Activated CD4-positive, alpha-beta T cell treated with anti-CD3 and anti-CD28 coated beads for 36 hours (primary cell): ENCODE measurements at regions of chr20 and their contacts with region 1.

Region 1: GRCh38 chr20:44738813-44739477 is 6.7 kb upstream of the KCNK15 start:
- DNase-seq: peak; percentile 75
- ATAC-seq: peak; percentile 80
- H3K4me3 Mint-ChIP-seq: peak overlapping the region; percentile 43
- H3K27ac Mint-ChIP-seq: peak overlapping the region; percentile 6
- H3K4me1 Mint-ChIP-seq: peaks cover 14% of the 10 kb centered on the region
- H3K27me3 Mint-ChIP-seq: no peaks in the 10 kb centered on the region

Region 2: GRCh38 chr20:44326391-44327159 is 412.4 kb before region 1 on chr20:
- CTCF ChIA-PET with region 1: no interaction called
- POLR2A ChIA-PET with region 1: no interaction called
- intact Hi-C with region 1: no loop called
- DNase-seq: peak; percentile 56
- ATAC-seq: peak; percentile 64
- H3K4me3 Mint-ChIP-seq: no peak overlapping the region
- H3K27ac Mint-ChIP-seq: no peak overlapping the region
- H3K4me1 Mint-ChIP-seq: no peaks in the 10 kb centered on the region
- H3K27me3 Mint-ChIP-seq: peaks cover 7% of the 10 kb centered on the region

Region 3: DNA sequence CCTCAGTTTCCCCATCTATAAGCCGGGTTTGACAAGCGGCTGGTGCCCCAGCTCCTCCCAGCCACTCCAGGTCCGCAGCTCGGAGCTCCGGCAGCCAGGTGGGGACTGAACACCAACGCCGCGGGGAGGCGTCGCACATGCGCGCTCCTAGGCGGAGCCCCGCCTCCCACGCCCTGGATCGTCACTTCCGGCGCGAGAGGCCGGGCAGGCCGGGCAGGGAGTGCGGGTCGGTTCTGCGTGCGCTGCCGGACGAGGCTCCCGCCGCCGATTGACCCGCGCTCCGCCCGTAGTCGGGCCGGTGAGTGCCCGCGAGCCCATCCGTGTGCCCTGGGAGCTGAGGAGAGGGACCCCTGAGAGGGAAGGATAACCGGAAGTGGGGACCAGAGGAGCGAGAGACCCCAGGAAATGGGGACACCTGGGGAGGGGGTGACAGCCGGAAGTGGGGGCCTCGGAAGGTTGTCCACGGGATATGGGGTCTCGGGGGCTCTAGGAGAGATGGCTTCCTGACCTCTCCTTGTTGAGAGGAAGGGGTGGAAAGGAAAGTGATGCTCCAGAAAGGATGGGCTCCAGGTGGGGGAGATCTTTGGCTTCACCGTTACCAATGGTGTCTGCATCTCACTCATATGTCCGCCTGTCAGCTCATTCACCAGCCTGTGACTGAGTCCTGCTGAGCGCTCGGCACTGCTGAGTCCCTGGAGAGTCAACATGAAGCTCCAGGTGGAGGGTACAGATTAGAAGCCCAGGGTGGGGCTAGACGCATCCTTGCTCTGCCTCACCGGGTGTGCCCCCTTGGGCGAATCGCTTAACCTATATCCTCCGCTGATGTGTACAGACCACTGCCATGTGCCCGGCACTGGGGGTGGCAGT is 263.0 kb before region 1 on chr20 and contains the start of gene TTPAL:
- CTCF ChIA-PET with region 1: no interaction called
- POLR2A ChIA-PET with region 1: no interaction called
- intact Hi-C with region 1: loop called in 1 of 2 experiments (anchors 5 kb)
- DNase-seq: peak; percentile 96
- ATAC-seq: peak; percentile 97
- H3K4me3 Mint-ChIP-seq: peak within 1 kb of the TSS; percentile 91
- H3K27ac Mint-ChIP-seq: peak within 1 kb of the TSS; percentile 97
- H3K4me1 Mint-ChIP-seq: peaks cover 22% of the 10 kb centered on the region
- H3K27me3 Mint-ChIP-seq: no peaks in the 10 kb centered on the region
- total RNA-seq, gene TTPAL: 18.3 to 21.5 TPM

Region 4: GRCh38 chr20:45415774-45416637 is 677.1 kb after region 1 on chr20 and contains the start of gene PIGT:
- CTCF ChIA-PET with region 1: no interaction called
- POLR2A ChIA-PET with region 1: no interaction called
- intact Hi-C with region 1: loop called in 1 of 2 experiments (anchors 5 kb)
- DNase-seq: peak; percentile 93
- ATAC-seq: peak; percentile 93
- H3K4me3 Mint-ChIP-seq: peak within 1 kb of the TSS; percentile 94
- H3K27ac Mint-ChIP-seq: peak within 1 kb of the TSS; percentile 97
- H3K4me1 Mint-ChIP-seq: peaks cover 44% of the 10 kb centered on the region
- H3K27me3 Mint-ChIP-seq: no peaks in the 10 kb centered on the region
- total RNA-seq, gene PIGT: 44.0 to 65.7 TPM